Activated CD8-positive, alpha-beta T cell treated with anti-CD3 and anti-CD28 coated beads, Interleukin-2, amount 10 ng/mL, durations not matched to agents 7 days and 5 days (primary cell): ENCODE measurements at regions of chr10 and their contacts with region 1.

Region 1: GRCh38 chr10:15167411-15168295 is 840 bp downstream of the NMT2 start:
- DNase-seq: peak; percentile 61
- ATAC-seq: peak; percentile 24
- H3K4me3 Mint-ChIP-seq: peak overlapping the region; percentile 90
- H3K27ac Mint-ChIP-seq: peak overlapping the region; percentile 83
- H3K4me1 Mint-ChIP-seq: peaks cover 57% of the 10 kb centered on the region
- H3K27me3 Mint-ChIP-seq: no peaks in the 10 kb centered on the region

Region 2: GRCh38 chr10:15106352-15107013 is 61.2 kb before region 1 on chr10:
- CTCF ChIA-PET with region 1: interaction called, 11 read pairs
- POLR2A ChIA-PET with region 1: no interaction called
- DNase-seq: peak; percentile 78
- ATAC-seq: peak; percentile 89
- H3K4me3 Mint-ChIP-seq: no peak overlapping the region
- H3K27ac Mint-ChIP-seq: no peak overlapping the region
- H3K4me1 Mint-ChIP-seq: peaks cover 8% of the 10 kb centered on the region
- H3K27me3 Mint-ChIP-seq: no peaks in the 10 kb centered on the region

Region 3: DNA sequence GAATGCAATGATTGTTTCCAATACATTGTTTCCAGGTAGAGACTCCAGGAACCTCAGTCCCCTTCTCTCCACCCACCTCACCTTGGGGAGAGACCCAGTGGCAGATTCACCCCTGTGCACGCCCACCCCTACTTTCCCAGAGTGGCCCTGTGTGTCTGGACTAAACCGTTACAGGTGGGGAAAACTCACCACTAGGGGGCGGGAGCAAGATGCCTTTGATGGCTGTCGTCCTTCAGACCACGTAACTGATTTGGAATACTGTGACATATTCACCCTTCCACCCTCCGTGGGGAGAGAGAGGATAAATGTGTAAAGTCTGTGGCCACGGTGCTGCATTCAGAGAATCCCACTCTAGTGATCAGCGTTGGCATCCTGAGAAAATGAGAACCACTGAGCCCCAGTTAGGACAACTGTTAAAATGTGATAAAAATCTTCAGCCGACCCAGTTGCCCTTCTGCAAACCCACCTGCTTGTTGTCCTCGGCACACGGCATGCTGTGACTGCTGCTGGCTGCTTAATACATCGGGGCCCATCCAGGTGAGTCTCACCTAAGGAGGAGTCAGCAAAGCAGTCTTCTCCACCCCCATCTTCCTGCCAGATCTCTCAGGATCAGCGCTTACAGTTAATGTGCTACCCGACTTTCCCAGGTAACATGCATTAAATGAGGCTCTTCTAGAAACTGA is 42.3 kb after region 1 on chr10:
- CTCF ChIA-PET with region 1: interaction called, 16 read pairs
- POLR2A ChIA-PET with region 1: interaction called, 8 read pairs
- DNase-seq: peak; percentile 90
- ATAC-seq: peak; percentile 78
- H3K4me3 Mint-ChIP-seq: no peak overlapping the region
- H3K27ac Mint-ChIP-seq: peak overlapping the region; percentile 46
- H3K4me1 Mint-ChIP-seq: peaks cover 48% of the 10 kb centered on the region
- H3K27me3 Mint-ChIP-seq: no peaks in the 10 kb centered on the region

Region 4: DNA sequence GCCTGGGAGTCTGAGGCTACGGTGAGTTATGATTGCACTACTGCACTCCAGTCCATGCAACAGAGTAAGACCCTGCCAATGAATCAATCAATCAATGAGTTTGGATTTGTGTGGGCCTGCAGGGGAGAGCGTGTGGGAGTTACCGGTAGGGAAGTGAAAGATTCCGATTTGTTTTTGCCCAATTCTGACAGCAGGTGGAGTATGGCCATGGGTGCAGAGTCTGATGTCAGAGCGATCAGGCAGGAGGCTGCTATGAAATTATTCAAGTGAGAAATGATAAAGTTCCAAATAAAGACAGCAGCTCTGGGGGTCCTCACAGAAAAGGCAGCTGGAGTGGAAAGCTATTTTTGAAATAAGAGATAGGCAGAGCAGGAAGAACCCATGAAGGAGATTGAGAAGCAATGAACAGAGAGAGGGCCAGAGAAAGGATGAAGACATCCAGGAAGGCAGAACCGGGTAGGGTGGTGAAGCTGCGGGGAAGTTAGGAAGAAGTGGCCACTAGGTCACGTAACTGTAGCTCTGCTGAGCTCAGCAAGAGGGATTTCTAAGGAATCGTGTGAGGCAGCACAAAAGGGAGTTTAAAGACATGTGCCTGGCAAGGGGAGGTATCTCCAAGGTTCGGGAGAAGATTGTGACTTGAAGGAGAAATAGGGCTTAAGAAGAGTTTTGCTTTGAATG is 94.5 kb after region 1 on chr10:
- CTCF ChIA-PET with region 1: no interaction called
- POLR2A ChIA-PET with region 1: no interaction called
- DNase-seq: no peak
- ATAC-seq: no peak
- H3K4me3 Mint-ChIP-seq: no peak overlapping the region
- H3K27ac Mint-ChIP-seq: no peak overlapping the region
- H3K4me1 Mint-ChIP-seq: no peaks in the 10 kb centered on the region
- H3K27me3 Mint-ChIP-seq: no peaks in the 10 kb centered on the region